GM12878 (cell line): ENCODE measurements at regions of chr1 and their contacts with region 1.

Region 1: GRCh38 chr1:206544562-206545257 is 37.4 kb downstream of the RASSF5 start:
- DNase-seq: no peak
- ATAC-seq: peak; percentile 98
- H3K4me3 ChIP-seq: no peak overlapping the region
- H3K27ac ChIP-seq: no peak overlapping the region
- H3K4me1 ChIP-seq: no peaks in the 10 kb centered on the region; the same call in 1 of the 2 replicates
- H3K27me3 ChIP-seq: no peaks in the 10 kb centered on the region
- CTCF ChIP-seq: peak; percentile 86 to 91 (median 88)
- EP300 ChIP-seq: no peak
- POLR2A ChIP-seq: no peak
- RAD21 ChIP-seq: peak; percentile 98

Region 2: GRCh38 chr1:206479183-206480125 is 65.3 kb before region 1 on chr1:
- CTCF ChIA-PET with region 1: interaction called, 37 read pairs
- POLR2A ChIA-PET with region 1: interaction called, 4 read pairs
- RAD21 ChIA-PET with region 1: interaction called, 29 read pairs
- SMC1A ChIA-PET with region 1: interaction called, 15 read pairs
- in situ Hi-C with region 1: no loop called
- intact Hi-C with region 1: loop called (anchors 2 kb)
- DNase-seq: no peak
- ATAC-seq: peak; percentile 77
- H3K4me3 ChIP-seq: no peak overlapping the region
- H3K27ac ChIP-seq: no peak overlapping the region
- H3K4me1 ChIP-seq: peaks cover 17% of the 10 kb centered on the region
- H3K27me3 ChIP-seq: no peaks in the 10 kb centered on the region
- CTCF ChIP-seq: peak; percentile 77 to 87 (median 84)
- EP300 ChIP-seq: no peak
- POLR2A ChIP-seq: no peak
- RAD21 ChIP-seq: peak; percentile 80

Region 3: GRCh38 chr1:206507284-206508129 is 37.2 kb before region 1 on chr1 and contains the start of gene RASSF5:
- CTCF ChIA-PET with region 1: interaction called, 20 read pairs
- POLR2A ChIA-PET with region 1: no interaction called
- RAD21 ChIA-PET with region 1: interaction called, 10 read pairs
- SMC1A ChIA-PET with region 1: interaction called, 6 read pairs
- in situ Hi-C with region 1: no loop called
- intact Hi-C with region 1: no loop called
- DNase-seq: no peak
- ATAC-seq: peak; percentile 78
- H3K4me3 ChIP-seq: peak within 1 kb of the TSS; percentile 72
- H3K27ac ChIP-seq: peak within 1 kb of the TSS; percentile 29; the same call in 1 of the 2 replicates
- H3K4me1 ChIP-seq: peaks cover 41% of the 10 kb centered on the region
- H3K27me3 ChIP-seq: no peaks in the 10 kb centered on the region
- CTCF ChIP-seq: no peak
- EP300 ChIP-seq: 0 out of 4 replicates have a peak, but pooled peaks of 1 of the 2 experiments have one; percentile 21
- POLR2A ChIP-seq: peak; percentile 83
- RAD21 ChIP-seq: no peak
- polyA plus RNA-seq, gene RASSF5: 14.0 to 25.4 TPM

Region 4: GRCh38 chr1:206556750-206557635 is 12.3 kb after region 1 on chr1:
- CTCF ChIA-PET with region 1: interaction called, 237 read pairs
- POLR2A ChIA-PET with region 1: interaction called, 24 read pairs
- RAD21 ChIA-PET with region 1: interaction called, 95 read pairs
- SMC1A ChIA-PET with region 1: interaction called, 74 read pairs
- in situ Hi-C with region 1: no loop called
- intact Hi-C with region 1: no loop called
- DNase-seq: no peak
- ATAC-seq: peak; percentile 76
- H3K4me3 ChIP-seq: peak overlapping the region; percentile 95
- H3K27ac ChIP-seq: peak overlapping the region; percentile 98
- H3K4me1 ChIP-seq: peaks cover 42% of the 10 kb centered on the region
- H3K27me3 ChIP-seq: no peaks in the 10 kb centered on the region
- CTCF ChIP-seq: no peak
- EP300 ChIP-seq: peak in 1 of 2 experiments; percentile 51; a peak in 2 of 4 replicates
- POLR2A ChIP-seq: peak; percentile 90
- RAD21 ChIP-seq: no peak

Region 5: DNA sequence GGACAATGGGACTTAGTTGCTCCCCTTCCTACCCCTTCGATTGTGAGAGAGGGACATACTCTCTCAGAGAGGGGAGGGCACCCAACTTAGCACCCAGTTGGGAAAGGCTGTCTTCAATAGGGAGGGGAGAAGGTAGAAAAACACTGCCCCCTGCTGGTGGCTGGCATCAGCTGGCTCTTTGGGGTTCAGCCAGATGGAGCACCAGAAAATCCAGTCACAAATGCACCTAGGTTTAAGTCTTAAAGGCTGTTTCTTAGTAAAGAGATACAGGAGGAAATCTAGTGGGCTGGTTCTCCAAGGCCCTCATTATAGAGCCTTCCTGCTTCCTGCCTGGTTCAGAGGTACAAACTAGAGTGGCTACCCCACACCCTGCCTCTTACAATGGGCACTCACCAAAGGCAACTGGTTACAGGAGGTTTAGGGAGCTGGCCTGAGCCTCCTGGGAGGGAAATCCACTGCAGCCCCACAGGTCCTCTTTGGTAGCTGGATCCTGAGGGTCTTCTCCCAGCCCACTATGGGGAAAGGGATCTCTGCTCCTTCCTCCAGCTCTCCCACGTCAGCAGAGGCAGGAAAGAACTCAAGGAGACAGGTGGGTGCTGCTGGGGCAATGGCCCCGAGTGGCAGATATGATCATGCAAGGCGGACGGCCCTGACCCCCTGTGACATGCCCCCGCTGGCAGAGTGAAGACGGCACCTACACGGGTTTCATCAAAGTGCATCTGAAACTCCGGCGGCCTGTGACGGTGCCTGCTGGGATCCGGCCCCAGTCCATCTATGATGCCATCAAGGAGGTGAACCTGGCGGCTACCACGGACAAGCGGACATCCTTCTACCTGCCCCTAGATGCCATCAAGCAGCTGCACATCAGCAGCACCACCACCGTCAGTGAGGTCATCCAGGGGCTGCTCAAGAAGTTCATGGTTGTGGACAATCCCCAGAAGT is 39.3 kb after region 1 on chr1:
- CTCF ChIA-PET with region 1: interaction called, 440 read pairs
- POLR2A ChIA-PET with region 1: interaction called, 12 read pairs
- RAD21 ChIA-PET with region 1: interaction called, 85 read pairs
- SMC1A ChIA-PET with region 1: interaction called, 311 read pairs
- in situ Hi-C with region 1: loop called (anchors 5 kb)
- intact Hi-C with region 1: loop called (anchors 1 kb)
- DNase-seq: no peak
- ATAC-seq: peak; percentile 67
- H3K4me3 ChIP-seq: no peak overlapping the region
- H3K27ac ChIP-seq: no peak overlapping the region
- H3K4me1 ChIP-seq: peaks cover 28% of the 10 kb centered on the region
- H3K27me3 ChIP-seq: no peaks in the 10 kb centered on the region
- CTCF ChIP-seq: peak; percentile 82 to 92 (median 90)
- EP300 ChIP-seq: no peak
- POLR2A ChIP-seq: no peak
- RAD21 ChIP-seq: peak; percentile 92

Region 6: DNA sequence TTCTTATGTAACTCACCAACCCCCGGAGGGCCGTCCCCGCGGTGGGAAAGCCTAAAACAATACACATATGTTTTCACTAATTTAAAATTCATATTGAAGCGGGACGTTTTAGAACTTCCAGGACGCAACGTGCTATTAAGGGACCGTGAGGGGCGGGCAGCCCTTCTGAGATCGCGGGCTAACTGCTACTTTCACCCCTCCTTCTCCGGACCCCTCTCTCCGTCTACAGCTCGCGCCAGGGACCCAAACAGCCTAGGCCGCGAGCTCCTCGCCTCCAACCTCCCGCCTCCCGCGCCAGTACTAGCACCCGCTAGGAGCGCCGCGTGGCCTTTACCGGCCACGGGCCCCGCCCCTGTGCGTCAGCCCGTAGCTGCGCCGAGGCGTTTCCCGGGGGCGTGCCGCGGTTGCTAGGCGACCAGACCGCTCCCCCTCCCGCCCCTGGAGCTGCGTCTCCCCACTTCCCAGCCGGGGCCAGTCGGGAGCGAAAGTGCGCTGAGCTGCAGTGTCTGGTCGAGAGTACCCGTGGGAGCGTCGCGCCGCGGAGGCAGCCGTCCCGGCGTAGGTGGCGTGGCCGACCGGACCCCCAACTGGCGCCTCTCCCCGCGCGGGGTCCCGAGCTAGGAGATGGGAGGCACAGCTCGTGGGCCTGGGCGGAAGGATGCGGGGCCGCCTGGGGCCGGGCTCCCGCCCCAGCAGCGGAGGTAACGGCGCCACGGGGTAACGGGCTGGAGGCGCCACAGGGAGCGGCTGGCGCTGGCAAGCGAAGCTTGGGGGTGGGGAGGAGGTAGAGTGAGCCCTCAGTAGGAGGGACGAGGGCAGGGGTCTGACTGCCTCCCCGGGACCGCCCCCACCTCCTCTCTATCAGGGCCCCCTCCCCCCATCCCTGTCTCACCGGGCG is 90.6 kb after region 1 on chr1 and contains the start of gene DYRK3:
- CTCF ChIA-PET with region 1: interaction called, 21 read pairs
- POLR2A ChIA-PET with region 1: no interaction called
- RAD21 ChIA-PET with region 1: interaction called, 5 read pairs
- SMC1A ChIA-PET with region 1: interaction called, 7 read pairs
- in situ Hi-C with region 1: no loop called
- intact Hi-C with region 1: no loop called
- DNase-seq: peak; percentile 71
- ATAC-seq: peak; percentile 92
- H3K4me3 ChIP-seq: peak within 1 kb of the TSS; percentile 94
- H3K27ac ChIP-seq: peak within 1 kb of the TSS; percentile 62
- H3K4me1 ChIP-seq: peaks cover 26% of the 10 kb centered on the region
- H3K27me3 ChIP-seq: no peaks in the 10 kb centered on the region
- CTCF ChIP-seq: 0 out of 6 replicates have a peak, but pooled peaks of 1 of the 3 experiments have one; percentile 5
- EP300 ChIP-seq: 0 out of 4 replicates have a peak, but pooled peaks of 1 of the 2 experiments have one; percentile 17
- POLR2A ChIP-seq: peak; percentile 94
- RAD21 ChIP-seq: no peak
- polyA plus RNA-seq, gene DYRK3: 1.6 to 2.8 TPM